Right cardiac atrium (tissue), 5 donors: ENCODE measurements at regions of chr12 and their contacts with region 1.

Region 1: GRCh38 chr12:56243731-56244181 is 13.9 kb downstream of the SLC39A5 start:
- DNase-seq: no peak
- ATAC-seq: peak in 1 of 2 donors; percentile 6
- H3K4me3 ChIP-seq: no peak overlapping the region
- H3K27ac ChIP-seq: no peak overlapping the region
- H3K4me1 ChIP-seq: no peaks in the 10 kb centered on the region
- H3K27me3 ChIP-seq: no peaks in the 10 kb centered on the region

Region 2: GRCh38 chr12:55629058-55629841 is 614.5 kb before region 1 on chr12:
- intact Hi-C with region 1: no loop called
- DNase-seq: no peak
- ATAC-seq: no peak
- H3K4me3 ChIP-seq: no peak overlapping the region
- H3K27ac ChIP-seq: peak overlapping the region; percentile 27
- H3K4me1 ChIP-seq: no peaks in the 10 kb centered on the region
- H3K27me3 ChIP-seq: no peaks in the 10 kb centered on the region

Region 3: GRCh38 chr12:56229916-56230431 is 13.8 kb before region 1 on chr12 and contains the start of gene SLC39A5:
- intact Hi-C with region 1: loop called in 1 of 4 experiments (anchors 2 kb)
- DNase-seq: no peak
- ATAC-seq: no peak
- H3K4me3 ChIP-seq: no peak within 1 kb of the TSS
- H3K27ac ChIP-seq: no peak within 1 kb of the TSS
- H3K4me1 ChIP-seq: no peaks in the 10 kb centered on the region
- H3K27me3 ChIP-seq: no peaks in the 10 kb centered on the region
- total RNA-seq, gene SLC39A5: 0.49 TPM in 1 of 4 donors, not detected in the others